Heart right ventricle (tissue), 16 donors: ENCODE measurements at regions of chr1 and their contacts with region 1.

Region 1: GRCh38 chr1:154911691-154912550 is 24.6 kb downstream of the PMVK start:
- DNase-seq: no peak
- ATAC-seq: peak; percentile 50 to 91 (median 82)
- H3K4me3 ChIP-seq: no peak overlapping the region
- H3K27ac ChIP-seq: peak overlapping the region in 7 of 10 donors; percentile 21 to 58 (median 48)
- H3K4me1 ChIP-seq: peaks cover 0 to 21% (median 5%) of the 10 kb centered on the region in 9 donors
- H3K27me3 ChIP-seq: no peaks in the 10 kb centered on the region
- CTCF ChIP-seq: no peak

Region 2: DNA sequence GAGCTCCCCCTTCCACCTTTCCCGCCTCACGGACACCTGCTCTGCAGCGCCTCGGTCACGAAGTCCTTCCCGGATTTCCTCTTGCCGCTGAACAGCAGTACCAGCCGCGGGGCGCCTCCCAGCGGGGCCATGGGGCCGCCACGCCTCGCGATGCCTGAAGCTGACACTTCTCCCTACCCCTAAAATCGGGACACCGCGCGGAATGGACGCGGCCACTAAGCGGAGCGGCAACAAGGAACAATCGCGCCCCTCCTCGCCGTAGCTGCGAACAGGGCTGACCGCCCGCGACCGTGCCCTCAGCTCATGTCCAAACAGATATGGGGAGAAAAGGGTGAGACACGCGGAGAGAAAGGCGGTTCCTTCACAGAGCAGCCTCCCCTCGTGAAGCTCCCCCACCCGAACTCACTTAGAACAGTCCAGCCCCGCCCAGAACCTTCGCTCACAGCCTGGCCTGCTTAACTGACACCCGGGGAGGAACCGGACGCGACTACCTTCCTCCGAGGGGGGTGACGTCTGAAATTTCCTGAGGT is 24.7 kb after region 1 on chr1 and contains the start of gene PMVK:
- intact Hi-C with region 1: loop called in 1 of 10 experiments (anchors 1 kb)
- DNase-seq: peak; percentile 92 to 98
- ATAC-seq: peak; percentile 92 to 97 (median 96)
- H3K4me3 ChIP-seq: peak within 1 kb of the TSS; percentile 44 to 70 (median 64)
- H3K27ac ChIP-seq: peak within 1 kb of the TSS; percentile 87 to 99 (median 96)
- H3K4me1 ChIP-seq: peaks cover 7 to 43% (median 25%) of the 10 kb centered on the region in 9 donors
- H3K27me3 ChIP-seq: no peaks in the 10 kb centered on the region
- CTCF ChIP-seq: peak in 8 of 9 donors; percentile 11 to 62 (median 36)
- total RNA-seq, gene PMVK: 29.9 to 66.4 (median 39.4) TPM

Region 3: DNA sequence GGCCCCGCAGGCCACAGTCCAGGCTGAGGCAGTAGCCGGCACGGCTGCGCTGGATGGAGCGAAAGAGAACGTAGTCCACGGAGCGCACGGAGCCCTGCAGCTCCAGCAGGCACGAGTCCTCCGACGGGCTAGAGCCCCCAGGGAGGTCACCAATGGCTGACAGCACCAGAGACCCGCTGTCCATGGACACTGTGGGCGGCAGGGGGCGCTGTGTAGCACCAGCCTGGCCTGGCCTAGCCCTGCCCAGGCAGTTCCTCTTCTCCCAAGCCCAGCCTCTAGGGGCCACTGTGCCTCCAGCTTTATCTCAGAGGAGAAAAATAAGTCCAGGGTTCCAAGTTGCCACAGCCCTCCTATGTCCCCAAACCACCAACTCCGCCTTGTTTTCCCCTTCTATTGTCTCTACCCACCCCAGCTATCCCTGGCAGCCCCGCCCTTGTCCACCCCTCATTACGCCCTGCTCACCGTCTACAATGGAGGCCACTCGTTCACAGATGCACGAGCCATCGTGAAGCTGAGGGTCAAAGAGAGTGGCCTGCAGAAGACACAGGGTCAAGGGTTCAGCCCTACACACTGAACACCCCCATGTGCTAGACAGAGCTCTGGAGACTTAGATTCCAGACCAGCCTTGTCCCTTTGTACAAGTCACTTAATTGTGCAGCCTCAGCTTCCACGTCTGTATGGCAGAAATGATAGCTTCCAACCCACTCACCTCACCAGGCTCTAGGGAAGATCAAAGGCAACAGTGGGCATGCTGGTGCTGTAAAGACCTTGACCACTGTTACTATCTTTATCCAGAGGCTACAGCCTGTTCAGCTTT is 338.9 kb after region 1 on chr1:
- intact Hi-C with region 1: no loop called
- DNase-seq: peak; percentile 93 to 95
- ATAC-seq: peak; percentile 80 to 89 (median 84)
- H3K4me3 ChIP-seq: peak overlapping the region in 7 of 10 donors; percentile 12 to 57 (median 37)
- H3K27ac ChIP-seq: peak overlapping the region in 8 of 10 donors; percentile 15 to 90 (median 38)
- H3K4me1 ChIP-seq: peaks cover 12 to 36% (median 29%) of the 10 kb centered on the region in 9 donors
- H3K27me3 ChIP-seq: no peaks in the 10 kb centered on the region
- CTCF ChIP-seq: peak in 8 of 9 donors; percentile 99 to 100 (median 100)

Region 4: GRCh38 chr1:156012051-156012817 is 1100.3 kb after region 1 on chr1:
- intact Hi-C with region 1: no loop called
- DNase-seq: no peak
- ATAC-seq: no peak
- H3K4me3 ChIP-seq: no peak overlapping the region
- H3K27ac ChIP-seq: no peak overlapping the region
- H3K4me1 ChIP-seq: no peaks in the 10 kb centered on the region
- H3K27me3 ChIP-seq: no peaks in the 10 kb centered on the region
- CTCF ChIP-seq: no peak